ENCODE measurements at regions of chr2 and their contacts with region 1.

Region 1: DNA sequence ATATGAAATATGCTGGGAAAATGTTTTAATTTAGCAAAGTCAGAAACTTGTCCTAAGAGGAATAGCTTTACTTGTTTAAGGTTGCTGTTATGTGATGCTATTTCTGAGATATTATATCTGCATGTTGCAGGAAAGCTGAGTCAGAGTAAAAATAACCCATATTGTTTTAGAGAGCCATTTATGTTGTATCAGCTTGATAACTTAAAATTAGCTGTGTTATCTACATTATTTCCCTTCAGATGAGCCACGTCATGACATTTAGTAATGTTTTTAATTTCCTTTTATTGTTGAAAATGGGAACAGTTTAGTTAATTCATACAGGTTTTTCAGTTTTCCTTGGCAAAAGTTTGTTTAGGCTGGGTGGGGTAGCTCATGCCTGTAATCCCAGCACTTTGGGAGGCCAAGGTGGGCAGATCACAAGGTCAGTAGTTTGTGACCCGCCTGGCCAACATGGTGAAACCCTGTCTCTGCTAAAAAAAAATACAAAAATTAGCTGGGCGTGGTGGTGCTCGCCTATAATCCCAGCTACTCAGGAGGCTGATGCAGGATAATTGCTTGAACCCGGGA is 55.8 kb downstream of the TTC27 start:
- DNase-seq: no peak

Region 2: DNA sequence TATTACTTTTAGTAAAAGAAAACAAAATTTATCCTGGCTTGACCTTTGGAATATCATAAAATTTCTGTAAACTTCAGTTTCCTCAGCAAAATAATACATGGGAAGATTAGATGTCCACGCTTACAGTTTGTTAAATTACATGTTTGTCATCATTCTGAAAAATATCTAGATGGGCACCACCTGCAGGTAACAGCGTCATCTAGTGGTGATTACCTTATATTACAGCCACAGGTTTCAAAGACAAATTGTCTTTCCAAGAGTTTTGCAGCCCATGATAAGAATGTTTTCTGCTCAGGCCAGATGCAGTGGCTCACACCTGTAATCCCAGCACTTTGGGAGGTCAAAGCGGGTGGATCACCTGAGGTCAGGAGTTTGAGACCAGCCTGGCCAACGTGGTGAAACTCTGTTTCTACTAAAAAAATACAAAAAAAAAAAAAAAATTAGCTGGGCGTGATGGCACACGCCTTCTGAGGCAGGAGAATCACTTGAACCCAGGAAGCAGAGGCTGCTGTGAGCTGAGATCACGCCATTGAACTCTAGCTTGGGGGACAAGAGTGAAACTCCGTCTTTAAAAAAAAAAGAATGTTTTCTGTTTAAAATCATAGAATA is 696.5 kb after region 1 on chr2:
- CTCF ChIA-PET with region 1: interaction called, 12 read pairs
- POLR2A ChIA-PET with region 1: no interaction called
- DNase-seq: peak; percentile 9